ENCODE measurements at regions of chr15 and their contacts with region 1.

Region 1: DNA sequence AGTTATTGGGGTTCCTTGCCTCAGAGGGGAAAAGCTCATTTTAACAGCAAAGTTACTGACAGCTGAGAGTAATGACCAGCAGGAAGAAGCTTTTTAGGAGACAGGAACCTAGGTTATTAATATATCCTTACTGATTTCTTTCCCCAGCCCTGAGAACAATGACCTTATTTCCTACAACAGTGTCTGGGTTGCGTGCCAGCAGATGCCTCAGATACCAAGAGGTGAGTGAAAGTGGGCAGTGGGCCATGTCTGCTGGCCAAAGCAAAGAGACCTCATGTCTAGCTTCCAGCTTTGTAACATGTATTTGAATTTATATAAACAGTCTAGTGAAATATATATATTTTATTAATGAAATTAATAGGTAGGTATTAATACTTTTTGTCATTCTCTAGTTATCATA is 5.0 kb downstream of the CCNDBP1 start:
- DNase-seq: peak; percentile 22
- H3K4me3 ChIP-seq: no peak overlapping the region
- CTCF ChIP-seq: no peak

Region 2: DNA sequence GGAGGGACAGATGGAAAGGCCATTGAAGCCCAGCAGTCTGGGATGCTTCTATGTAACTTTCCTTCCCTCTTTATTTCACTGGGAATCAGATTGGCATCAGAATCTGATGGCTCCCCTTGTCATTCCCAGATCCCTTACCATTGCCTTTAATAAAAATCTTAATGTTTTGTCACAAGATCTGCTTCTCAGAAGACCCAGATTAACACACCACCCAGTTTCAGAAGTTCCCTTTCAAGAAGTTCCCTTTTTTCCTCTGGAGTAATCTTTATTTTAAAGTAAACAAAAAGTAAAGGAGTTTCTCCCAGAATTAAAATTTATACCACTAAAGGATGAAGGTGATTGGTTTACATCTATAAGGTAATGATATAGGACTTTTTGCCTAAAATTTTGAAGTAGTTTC is 160.7 kb before region 1 on chr15:
- in situ Hi-C with region 1: no loop called
- DNase-seq: no peak
- H3K4me3 ChIP-seq: no peak overlapping the region
- CTCF ChIP-seq: no peak

Region 3: DNA sequence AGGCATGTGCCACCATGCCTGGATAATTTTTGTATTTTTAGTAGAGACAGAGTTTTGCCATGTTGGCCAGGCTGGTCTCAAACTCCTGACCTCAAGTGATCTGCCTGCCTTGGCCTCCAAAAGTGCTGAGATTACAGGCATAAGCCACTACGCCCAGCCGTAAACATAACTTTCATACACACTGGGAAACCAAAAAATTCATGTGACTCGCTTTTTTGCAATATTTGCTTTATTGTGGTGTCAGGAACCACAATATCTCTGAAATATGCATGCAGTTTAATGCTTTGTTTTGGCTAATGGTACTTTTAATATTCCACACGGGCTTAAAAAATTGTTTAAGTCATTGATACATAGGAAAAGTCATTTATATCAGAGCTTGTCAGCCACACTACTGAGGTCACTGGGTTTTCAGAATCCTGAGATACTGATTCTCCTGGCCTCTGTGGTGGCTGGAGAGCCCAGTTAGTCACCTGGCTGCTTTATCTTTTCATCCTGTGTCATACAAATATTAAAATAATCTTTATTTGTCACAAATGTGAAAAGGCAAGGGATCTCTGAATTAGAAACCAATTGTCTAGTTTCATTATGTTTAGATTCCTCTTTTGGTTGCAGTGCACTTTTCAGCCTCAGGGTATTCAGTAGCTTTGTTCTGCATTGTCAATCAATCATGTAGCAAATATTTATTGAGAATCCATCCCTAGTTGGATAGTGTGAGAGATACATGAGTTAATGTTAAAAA is 46.8 kb before region 1 on chr15:
- in situ Hi-C with region 1: loop called (anchors 5 kb)
- DNase-seq: no peak
- H3K4me3 ChIP-seq: no peak overlapping the region
- CTCF ChIP-seq: no peak

Region 4: GRCh38 chr15:43285609-43286037 is 95.4 kb after region 1 on chr15:
- in situ Hi-C with region 1: loop called (anchors 5 kb)
- DNase-seq: peak; percentile 47
- H3K4me3 ChIP-seq: no peak overlapping the region
- CTCF ChIP-seq: peak; percentile 78

Measured in astrocyte of the cerebellum (primary cell).